Pancreas (tissue), 10 donors: ENCODE measurements at regions of chr5 and their contacts with region 1.

Region 1: DNA sequence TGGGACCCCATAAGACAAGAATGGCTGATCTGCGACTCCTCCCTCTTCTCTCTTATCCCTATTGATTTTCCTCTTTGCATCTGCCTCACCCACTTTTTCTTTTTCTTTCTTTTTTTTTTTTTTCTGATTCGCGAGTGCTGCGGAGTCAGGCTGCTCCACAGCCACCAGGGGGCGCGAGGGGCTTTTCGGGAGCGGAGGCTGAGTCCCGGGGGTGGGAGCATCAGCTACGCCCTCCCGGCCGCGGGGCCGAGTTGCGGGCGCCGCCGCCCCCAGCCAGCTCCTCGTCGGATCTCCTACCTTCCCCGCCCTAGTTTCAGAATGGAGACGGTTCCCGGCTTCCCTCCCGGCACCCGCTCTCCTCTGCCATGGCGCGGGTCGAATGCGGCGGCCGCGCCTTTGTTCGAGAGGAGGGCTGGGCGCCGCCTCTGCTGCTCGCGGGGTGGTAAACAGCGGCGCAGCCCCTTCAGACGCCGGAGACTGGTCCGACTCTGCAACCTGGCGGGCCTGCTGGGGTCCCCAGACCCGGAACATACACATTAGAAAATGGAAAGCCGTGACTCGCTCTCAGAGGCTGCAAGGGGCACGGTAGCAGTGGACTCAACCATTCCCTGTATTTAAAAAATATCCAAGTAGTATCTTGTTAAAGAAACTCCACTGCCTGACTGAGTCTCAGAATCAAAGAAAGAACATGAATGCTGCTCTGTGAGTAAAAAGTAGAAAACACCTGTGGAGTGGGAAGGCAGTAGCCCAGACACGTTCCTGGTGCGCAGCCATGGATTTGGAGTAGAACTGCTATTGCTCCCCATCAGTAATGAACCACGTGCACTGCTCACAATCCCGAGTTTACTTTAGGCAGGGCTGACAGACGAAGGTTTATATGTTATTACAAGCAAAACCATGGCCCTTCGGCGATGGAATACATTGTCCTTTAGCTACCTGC is 55.7 kb downstream of the DPYSL3 start:
- DNase-seq: peak; percentile 66 to 97 (median 82)
- ATAC-seq: peak; percentile 90 to 95 (median 92)
- H3K4me3 ChIP-seq: peak overlapping the region; percentile 55 to 67 (median 60)
- H3K27ac ChIP-seq: peak overlapping the region in 2 of 4 donors; percentile 4 to 64
- H3K4me1 ChIP-seq: peaks cover 0 to 10% (median 0%) of the 10 kb centered on the region in 3 donors
- H3K27me3 ChIP-seq: peaks cover 0 to 6% (median 0%) of the 10 kb centered on the region in 4 donors
- CTCF ChIP-seq: peak; percentile 71 to 83 (median 82)

Region 2: DNA sequence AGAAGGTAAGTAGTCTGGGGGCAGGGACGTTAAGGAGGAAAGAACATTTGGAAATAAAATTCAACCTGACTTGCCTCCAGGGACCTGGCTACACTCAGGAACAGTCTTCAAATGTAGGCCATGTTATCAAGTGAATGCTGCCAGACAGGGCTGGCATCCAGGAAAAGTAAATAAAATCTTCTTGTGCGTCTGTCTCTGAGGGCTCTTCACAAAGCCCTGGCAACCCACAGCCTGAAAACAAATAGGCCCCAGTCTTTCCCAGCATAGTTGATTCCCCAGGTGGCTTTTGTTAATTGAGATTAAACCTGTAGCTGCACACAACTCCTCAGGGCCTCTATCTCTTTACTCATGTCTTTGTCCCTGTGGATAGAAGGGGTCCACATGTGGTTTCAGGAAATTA is 163.9 kb before region 1 on chr5:
- intact Hi-C with region 1: no loop called
- DNase-seq: peak in 2 of 6 donors; percentile 26 to 33
- ATAC-seq: peak in 3 of 4 donors; percentile 70 to 84 (median 73)
- H3K4me3 ChIP-seq: no peak overlapping the region
- H3K27ac ChIP-seq: no peak overlapping the region
- H3K4me1 ChIP-seq: peaks cover 0 to 17% (median 0%) of the 10 kb centered on the region in 3 donors
- H3K27me3 ChIP-seq: no peaks in the 10 kb centered on the region
- CTCF ChIP-seq: no peak

Region 3: GRCh38 chr5:147558826-147559225 is 104.7 kb after region 1 on chr5:
- intact Hi-C with region 1: loop called in 1 of 3 experiments (anchors 10 kb)
- DNase-seq: no peak
- ATAC-seq: peak in 3 of 4 donors; percentile 76 to 81 (median 78)
- H3K4me3 ChIP-seq: no peak overlapping the region
- H3K27ac ChIP-seq: no peak overlapping the region
- H3K4me1 ChIP-seq: no peaks in the 10 kb centered on the region
- H3K27me3 ChIP-seq: no peaks in the 10 kb centered on the region
- CTCF ChIP-seq: peak in 2 of 4 donors; percentile 18 to 20

Region 4: DNA sequence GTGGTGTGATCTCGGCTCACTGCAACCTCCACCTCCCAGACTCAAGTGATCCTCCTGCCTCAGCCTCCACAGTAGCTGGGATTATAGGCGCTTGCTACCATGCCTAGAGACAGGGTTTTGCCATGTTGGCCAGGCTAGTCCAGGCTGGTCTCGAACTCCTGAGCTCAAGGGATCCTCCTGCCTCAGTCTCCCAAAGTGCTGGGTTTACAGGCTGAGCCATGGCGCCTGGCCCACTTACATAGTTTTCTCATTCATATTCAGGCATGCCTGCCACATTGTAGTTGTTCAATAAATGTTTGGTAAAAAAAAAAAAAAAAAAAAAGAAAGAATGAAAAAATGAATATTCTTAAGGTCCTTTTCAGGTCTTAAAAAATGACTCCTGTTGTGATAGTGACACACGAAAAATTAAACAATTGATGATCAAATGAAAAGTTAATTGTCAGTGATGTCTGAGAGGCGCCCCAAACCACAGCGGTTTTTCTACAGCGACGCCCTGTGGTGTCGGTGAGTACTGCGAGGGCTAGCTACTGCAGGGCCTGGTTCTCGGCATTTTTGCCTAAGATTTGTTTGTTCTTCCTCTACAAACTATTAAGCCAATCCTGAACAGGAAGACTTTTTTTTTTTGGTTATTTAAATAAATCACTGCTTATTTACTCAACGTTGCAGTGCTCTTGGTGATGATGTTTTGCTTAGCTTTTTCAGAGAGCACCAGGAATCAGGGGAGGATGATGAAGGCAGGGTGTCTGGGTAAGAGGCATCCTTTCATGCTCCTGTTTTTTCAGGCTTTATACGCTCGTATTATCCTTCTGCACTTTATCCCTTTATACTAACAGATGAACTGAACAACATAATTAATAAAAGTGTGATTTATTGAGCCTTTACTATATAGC is 122.7 kb after region 1 on chr5:
- intact Hi-C with region 1: loop called in 1 of 3 experiments (anchors 5 kb)
- DNase-seq: peak in 5 of 6 donors; percentile 20 to 86 (median 49)
- ATAC-seq: peak; percentile 78 to 91 (median 87)
- H3K4me3 ChIP-seq: no peak overlapping the region
- H3K27ac ChIP-seq: no peak overlapping the region
- H3K4me1 ChIP-seq: no peaks in the 10 kb centered on the region
- H3K27me3 ChIP-seq: no peaks in the 10 kb centered on the region
- CTCF ChIP-seq: peak; percentile 45 to 80 (median 70)